Right ventricle myocardium superior (tissue), 1 donor: ENCODE measurements at regions of chr4 and their contacts with region 1.

Region 1: DNA sequence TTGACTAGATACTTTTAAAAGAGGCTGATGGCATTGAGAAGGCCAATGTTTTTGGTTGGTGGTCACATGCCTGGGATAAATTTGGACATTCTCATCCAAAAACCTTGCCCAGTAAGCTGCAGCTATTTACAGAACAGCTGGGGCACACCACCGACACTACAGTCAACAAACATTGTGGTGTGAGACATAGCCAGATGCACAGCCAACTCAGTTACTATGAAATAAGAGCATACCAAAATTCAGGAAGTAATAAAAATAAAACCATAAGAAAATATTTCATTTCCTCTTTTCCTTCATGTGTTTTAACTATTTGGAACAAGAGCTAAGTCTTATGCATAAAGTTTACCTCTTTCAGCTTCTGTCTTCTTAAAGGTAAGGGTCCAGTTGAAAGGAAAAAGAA is 8.8 kb downstream of the PPM1K start:
- DNase-seq: no peak
- ATAC-seq: peak; percentile 38

Region 2: DNA sequence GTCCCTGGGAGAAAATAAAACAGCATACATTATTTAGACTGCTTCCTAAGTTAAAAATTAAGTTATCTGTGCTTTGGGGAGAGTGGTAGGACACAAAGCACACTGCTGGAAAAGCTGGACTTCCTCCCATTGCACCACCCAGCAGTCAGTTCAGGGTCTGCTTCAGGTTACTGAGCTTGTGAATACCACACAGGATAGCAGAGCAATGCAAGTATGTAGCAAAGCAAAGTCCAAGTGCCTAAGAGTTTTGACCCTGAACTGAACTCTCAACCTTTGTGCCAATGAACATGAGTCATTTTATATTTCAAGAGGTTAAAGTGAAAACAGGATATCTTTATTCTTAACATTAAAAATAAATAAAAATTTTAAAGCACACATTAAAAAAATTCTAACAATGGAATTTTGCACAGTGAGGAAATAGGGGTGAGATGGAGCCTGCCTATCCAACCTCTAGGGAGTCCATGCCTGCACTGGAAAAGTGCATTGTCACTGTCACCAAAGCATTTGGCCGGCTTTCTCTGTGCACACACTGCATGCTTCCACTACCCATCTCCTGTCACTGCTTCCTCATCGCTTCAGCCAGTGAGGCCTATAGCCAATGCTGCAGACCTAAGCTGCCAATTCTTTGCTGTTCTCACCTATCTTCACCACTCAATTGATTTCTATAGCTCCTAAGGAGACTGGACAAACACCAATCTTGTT is 168.0 kb before region 1 on chr4:
- intact Hi-C with region 1: no loop called
- DNase-seq: no peak
- ATAC-seq: peak; percentile 68

Region 3: GRCh38 chr4:88225232-88226105 is 50.0 kb before region 1 on chr4:
- intact Hi-C with region 1: loop called (anchors 10 kb)
- DNase-seq: no peak
- ATAC-seq: peak; percentile 47